ENCODE measurements at regions of chr10 and their contacts with region 1.

Region 1: GRCh38 chr10:100286051-100287033 is at the start of gene BLOC1S2:
- DNase-seq: peak; percentile 92
- H3K4me3 Mint-ChIP-seq: peak within 1 kb of the TSS; percentile 96
- H3K27ac Mint-ChIP-seq: peak within 1 kb of the TSS; percentile 93
- H3K4me1 Mint-ChIP-seq: peaks cover 19% of the 10 kb centered on the region
- H3K27me3 Mint-ChIP-seq: no peaks in the 10 kb centered on the region
- CTCF ChIP-seq: no peak
- total RNA-seq, gene BLOC1S2: 86.7 and 98.4 TPM in 2 replicates

Region 2: DNA sequence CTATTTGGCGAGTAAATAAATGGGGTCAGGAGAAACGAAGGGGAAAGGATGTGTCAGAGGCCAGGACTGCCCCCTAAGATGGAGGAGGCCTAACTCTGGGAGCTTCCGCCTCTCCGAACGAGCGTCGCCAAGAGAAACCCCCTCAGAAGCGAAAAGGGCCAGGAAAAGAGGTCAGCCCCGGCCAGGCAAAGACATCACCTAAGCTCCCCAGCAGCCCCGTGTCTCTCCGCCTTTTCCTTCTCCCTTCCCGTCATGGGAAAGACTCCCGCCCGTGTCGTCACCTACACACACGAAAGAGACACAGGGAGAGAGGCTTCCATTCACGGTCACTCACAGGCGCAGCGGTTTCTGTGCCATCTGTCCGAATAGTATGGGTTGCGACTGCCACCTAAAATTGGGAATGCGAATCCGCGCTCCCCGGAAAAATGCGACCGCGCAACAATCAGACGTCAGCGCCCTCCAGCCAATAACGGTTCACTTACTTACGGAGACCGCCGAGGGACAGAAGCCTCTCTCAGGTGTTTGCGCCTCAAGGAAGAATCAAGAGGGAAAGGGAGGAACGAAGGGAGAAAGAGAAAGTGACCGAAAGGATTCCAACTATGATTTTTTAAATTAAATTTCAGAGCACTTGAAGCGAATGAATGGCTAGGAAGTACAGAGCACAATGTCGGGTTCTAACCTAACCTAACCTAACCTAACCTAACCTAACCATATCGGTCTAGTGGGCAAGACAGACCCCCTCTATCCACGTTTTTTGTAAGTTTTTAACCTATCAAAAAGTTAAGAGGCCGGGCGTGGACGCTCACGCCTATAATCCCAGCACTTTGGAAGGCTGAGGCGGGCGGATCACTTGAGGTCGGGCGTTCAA is 18.9 kb before region 1 on chr10 and contains the start of gene CWF19L1:
- CTCF ChIA-PET with region 1: interaction called, 3 read pairs
- POLR2A ChIA-PET with region 1: interaction called, 35 read pairs
- intact Hi-C with region 1: no loop called
- DNase-seq: peak; percentile 89
- H3K4me3 Mint-ChIP-seq: peak within 1 kb of the TSS; percentile 99
- H3K27ac Mint-ChIP-seq: peak within 1 kb of the TSS; percentile 99
- H3K4me1 Mint-ChIP-seq: peaks cover 5% of the 10 kb centered on the region
- H3K27me3 Mint-ChIP-seq: no peaks in the 10 kb centered on the region
- CTCF ChIP-seq: no peak
- total RNA-seq, gene CWF19L1: 21.7 and 24.4 TPM in 2 replicates

Region 3: DNA sequence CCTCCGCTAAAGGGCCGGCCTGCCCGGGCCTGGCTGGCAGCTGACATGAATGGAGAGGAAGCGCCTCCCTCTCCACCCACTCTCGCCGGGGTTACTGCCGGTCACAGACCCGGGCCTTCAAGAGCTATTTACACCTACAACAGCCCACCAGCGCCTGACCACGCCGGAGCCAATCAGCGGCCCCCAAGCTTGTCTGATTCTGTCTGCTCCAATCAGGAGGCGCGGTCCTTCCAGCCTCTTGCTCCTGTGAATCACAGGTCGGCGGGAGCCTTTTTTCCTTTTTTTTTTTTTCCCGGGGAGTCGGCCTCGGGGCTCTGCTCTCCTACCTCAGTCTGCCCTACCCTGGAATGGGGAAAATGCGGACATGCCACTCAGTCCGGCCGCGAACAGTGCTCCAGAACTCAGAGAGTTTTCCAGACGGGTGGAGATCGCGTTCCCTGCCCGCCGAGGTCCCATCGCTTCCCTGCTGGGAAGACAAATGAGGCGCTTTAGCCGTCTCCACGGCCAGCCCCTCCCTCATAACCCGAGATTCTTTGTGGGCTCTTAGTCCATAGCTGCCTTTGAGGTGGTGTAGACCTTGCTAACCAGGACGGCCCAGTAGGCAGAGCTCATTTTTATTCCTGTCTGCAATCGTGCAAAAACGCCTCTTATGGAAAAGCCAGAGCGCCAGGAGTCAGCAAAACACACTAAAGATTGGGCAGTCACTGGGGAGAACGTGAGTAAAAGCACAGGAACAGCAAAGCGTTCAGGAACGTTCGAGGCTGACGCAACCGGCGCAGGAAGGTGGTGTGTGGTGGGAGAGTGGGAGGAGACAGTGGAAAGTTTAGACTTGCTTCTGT is 87.2 kb after region 1 on chr10:
- CTCF ChIA-PET with region 1: no interaction called
- POLR2A ChIA-PET with region 1: interaction called, 19 read pairs
- intact Hi-C with region 1: no loop called
- DNase-seq: peak; percentile 100
- H3K4me3 Mint-ChIP-seq: no peak overlapping the region
- H3K27ac Mint-ChIP-seq: no peak overlapping the region
- H3K4me1 Mint-ChIP-seq: peaks cover 14% of the 10 kb centered on the region
- H3K27me3 Mint-ChIP-seq: no peaks in the 10 kb centered on the region
- CTCF ChIP-seq: no peak